OCI-LY7 (cell line): ENCODE measurements at regions of chr20 and their contacts with region 1.

Region 1: DNA sequence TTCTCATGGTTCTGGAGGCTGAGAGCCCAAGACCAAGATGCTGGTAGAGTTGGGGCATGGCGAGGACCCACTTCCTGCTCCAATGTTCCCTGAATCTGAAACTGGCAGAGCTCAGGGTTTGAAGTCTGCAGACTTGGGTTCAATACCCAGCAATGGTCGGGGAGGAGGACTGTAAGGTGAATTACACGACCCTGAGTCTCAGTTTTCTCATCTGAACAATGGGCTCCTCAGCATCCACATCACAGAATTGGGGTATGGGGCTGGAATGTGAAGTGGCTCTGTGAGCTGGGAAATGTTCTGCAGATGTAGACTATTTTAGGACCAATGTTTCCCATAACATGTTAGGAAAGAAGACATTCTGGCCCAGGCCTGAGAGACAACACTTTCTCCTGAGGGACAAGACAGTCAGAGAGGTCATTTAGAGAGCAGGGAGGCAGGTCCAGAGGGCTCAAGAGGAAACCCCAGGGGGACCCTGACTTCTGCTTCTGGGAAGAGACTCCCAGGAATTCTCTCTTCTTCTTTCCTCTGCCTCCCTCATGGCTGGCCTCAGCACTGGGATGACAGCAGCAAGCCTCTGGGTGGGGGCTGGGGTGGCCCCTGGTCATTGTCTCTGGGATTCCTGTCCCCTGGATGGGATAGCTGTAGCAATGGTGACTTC is 141.3 kb upstream of the PMEPA1 start:
- DNase-seq: no peak
- H3K4me3 ChIP-seq: no peak overlapping the region
- H3K27ac ChIP-seq: no peak overlapping the region
- H3K4me1 ChIP-seq: no peaks in the 10 kb centered on the region
- CTCF ChIP-seq: no peak

Region 2: GRCh38 chr20:57800791-57801430 is 50.2 kb before region 1 on chr20:
- CTCF ChIA-PET with region 1: no interaction called
- POLR2A ChIA-PET with region 1: no interaction called
- intact Hi-C with region 1: loop called (anchors 2 kb)
- DNase-seq: no peak
- H3K4me3 ChIP-seq: no peak overlapping the region
- H3K27ac ChIP-seq: no peak overlapping the region
- H3K4me1 ChIP-seq: no peaks in the 10 kb centered on the region
- CTCF ChIP-seq: no peak

Region 3: DNA sequence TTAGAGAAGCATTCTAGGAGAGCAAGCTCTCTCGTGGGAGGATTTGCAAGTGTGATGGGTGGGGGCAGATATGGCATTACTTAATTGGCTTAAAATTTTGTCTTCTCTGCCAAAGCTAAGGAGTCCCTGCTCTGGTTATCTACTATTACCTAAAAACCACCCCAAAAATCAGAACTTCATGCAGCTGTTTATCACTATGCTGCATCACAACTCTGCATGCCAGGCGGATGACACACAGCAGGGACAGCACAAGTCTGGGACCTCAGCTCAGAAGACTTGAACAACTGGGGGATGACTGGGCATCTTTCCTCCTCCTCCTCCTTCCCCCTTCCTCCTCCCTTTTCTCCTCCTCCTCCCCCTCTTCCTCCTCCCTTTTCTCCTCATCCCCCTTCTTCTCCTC is 77.0 kb after region 1 on chr20:
- CTCF ChIA-PET with region 1: no interaction called
- POLR2A ChIA-PET with region 1: no interaction called
- intact Hi-C with region 1: no loop called
- DNase-seq: no peak
- H3K4me3 ChIP-seq: no peak overlapping the region
- H3K27ac ChIP-seq: no peak overlapping the region
- H3K4me1 ChIP-seq: no peaks in the 10 kb centered on the region
- CTCF ChIP-seq: no peak